ENCODE measurements at regions of chr3 and their contacts with region 1.

Region 1: DNA sequence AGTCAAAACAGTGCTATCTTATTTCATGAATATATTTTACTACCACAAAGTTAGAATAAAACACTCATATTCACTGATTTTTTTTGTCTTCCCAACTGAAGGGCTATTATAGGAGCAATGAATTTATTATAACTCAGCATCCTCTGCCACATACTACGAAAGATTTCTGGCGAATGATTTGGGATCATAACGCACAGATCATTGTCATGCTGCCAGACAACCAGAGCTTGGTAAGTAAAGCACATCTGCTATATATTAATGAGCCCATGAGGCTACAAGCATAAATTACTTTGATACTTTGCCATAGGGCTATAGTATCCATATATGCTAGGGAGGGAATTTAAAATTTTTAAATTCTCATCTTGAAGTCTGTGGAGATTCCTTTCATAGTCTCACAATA is 95.9 kb downstream of the FEZF2 start:
- DNase-seq: no peak
- H3K4me3 ChIP-seq: no peak overlapping the region
- H3K27ac ChIP-seq: no peak overlapping the region
- H3K4me1 ChIP-seq: no peaks in the 10 kb centered on the region
- H3K27me3 ChIP-seq: no peaks in the 10 kb centered on the region
- CTCF ChIP-seq: no peak
- POLR2A ChIP-seq: no peak

Region 2: DNA sequence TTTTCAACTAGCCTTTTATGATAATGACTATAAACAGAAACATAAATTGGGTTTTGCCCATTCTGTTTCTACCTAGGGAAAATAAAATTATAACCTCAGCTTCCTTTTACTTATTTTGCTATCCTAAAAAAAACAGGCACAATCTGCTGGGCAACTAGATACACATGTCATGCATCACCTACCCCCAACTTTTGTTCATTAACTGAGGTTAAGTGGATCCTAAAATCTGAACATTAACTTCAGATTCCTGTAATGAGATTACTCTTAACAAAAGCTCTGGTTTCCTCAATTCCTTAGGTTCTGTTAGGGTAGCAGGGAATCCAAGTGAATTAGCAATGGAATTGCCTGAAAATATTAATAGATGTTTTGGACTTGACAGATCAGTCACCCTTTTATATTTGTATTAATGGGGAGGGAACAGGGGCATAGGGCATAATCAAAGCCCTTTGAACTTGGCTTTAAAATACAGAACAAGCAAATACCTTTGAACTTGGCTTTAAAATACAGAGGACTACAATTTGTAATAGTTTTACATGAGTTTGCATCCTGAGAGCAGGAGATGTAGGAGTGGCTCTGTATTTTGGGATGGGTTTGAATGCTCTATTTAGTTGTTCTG is 10.7 kb before region 1 on chr3:
- CTCF ChIA-PET with region 1: no interaction called
- POLR2A ChIA-PET with region 1: no interaction called
- dilution Hi-C with region 1: no loop called
- intact Hi-C with region 1: loop called (anchors 1 kb)
- DNase-seq: no peak
- H3K4me3 ChIP-seq: no peak overlapping the region
- H3K27ac ChIP-seq: no peak overlapping the region
- H3K4me1 ChIP-seq: no peaks in the 10 kb centered on the region
- H3K27me3 ChIP-seq: no peaks in the 10 kb centered on the region
- CTCF ChIP-seq: no peak
- POLR2A ChIP-seq: no peak

Region 3: GRCh38 chr3:62653796-62654195 is 376.3 kb after region 1 on chr3:
- CTCF ChIA-PET with region 1: no interaction called
- POLR2A ChIA-PET with region 1: no interaction called
- dilution Hi-C with region 1: no loop called
- intact Hi-C with region 1: no loop called
- DNase-seq: no peak
- H3K4me3 ChIP-seq: no peak overlapping the region
- H3K27ac ChIP-seq: no peak overlapping the region
- H3K4me1 ChIP-seq: no peaks in the 10 kb centered on the region
- H3K27me3 ChIP-seq: peaks cover 2 to 4% of the 10 kb centered on the region in 2 experiments
- CTCF ChIP-seq: no peak
- POLR2A ChIP-seq: no peak